ENCODE measurements at regions of chr7 and their contacts with region 1.

Region 1: DNA sequence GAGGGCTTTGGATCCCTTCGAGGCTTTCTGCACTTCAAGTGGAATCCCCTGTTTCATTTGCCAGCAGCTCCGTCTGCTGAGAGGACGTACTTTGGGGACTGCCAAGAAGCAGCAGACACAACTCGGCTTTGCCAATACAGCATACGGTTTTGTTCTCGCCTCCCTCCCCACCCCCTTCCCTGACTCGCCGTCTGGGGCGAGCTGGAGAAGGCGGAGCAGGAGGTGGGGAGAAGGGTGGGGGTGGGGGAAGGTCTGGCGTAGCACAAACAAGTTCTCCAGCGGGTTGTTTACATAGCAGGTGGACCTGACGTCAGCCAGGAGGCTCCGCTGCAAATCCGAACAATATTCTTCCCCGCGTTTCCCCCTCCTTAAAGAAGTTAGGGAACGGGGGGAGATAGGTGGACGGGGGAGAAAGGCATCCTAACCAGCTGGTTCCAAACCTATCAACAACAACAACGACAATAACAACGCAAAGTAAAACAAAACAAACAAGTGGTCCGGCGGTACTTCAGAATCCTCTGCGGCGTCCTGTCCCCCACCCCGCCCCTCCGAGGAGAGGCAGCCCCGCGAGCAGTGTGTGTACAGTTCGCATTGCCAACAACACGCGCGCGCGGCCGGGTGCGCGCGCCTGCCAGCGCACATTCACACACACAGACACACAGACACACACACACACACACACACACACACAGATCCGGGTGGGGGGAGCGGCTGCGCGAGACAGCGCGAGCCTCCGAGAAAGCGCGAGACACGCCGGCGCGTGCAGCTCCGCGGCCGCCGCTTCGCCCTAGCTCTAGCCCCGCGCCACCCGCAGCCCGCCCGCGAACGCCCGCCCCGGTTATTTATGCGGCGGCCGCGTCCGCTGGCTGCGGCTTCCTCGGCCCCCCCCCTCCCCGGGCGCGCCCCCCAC is 167.0 kb upstream of the PPP1R3A start:
- DNase-seq: peak; percentile 86 to 95
- H3K4me3 ChIP-seq: peak overlapping the region; percentile 50
- CTCF ChIP-seq: no peak
- POLR2A ChIP-seq: no peak

Region 2: GRCh38 chr7:114405427-114405826 is 319.6 kb after region 1 on chr7:
- intact Hi-C with region 1: loop called (anchors 10 kb)
- DNase-seq: no peak
- H3K4me3 ChIP-seq: no peak overlapping the region
- CTCF ChIP-seq: no peak
- POLR2A ChIP-seq: no peak